GM10248 (cell line): ENCODE measurements at regions of chr2 and their contacts with region 1.

Region 1: GRCh38 chr2:155802888-155803287 is 529.6 kb downstream of the NR4A2 start:
- DNase-seq: no peak
- CTCF ChIP-seq: no peak

Region 2: GRCh38 chr2:155815886-155816285 is 13.0 kb after region 1 on chr2:
- CTCF ChIA-PET with region 1: interaction called, 16 read pairs
- POLR2A ChIA-PET with region 1: no interaction called
- DNase-seq: peak; percentile 15
- CTCF ChIP-seq: peak; percentile 62